ENCODE measurements at regions of chr12 and their contacts with region 1.

Region 1: GRCh38 chr12:31317471-31318395 is 8.2 kb downstream of the SINHCAF start:
- DNase-seq: peak in 6 of 9 donors; percentile 29 to 58 (median 49)
- ATAC-seq: peak; percentile 80
- H3K4me3 ChIP-seq: peak overlapping the region; percentile 34
- H3K4me3 Mint-ChIP-seq: peak overlapping the region; percentile 69 to 95 (median 87)
- H3K27ac ChIP-seq: peak overlapping the region; percentile 64
- H3K27ac Mint-ChIP-seq: peak overlapping the region; percentile 81 to 95 (median 93)
- H3K4me1 ChIP-seq: peaks cover 24 to 60% of the 10 kb centered on the region in 2 donors
- H3K4me1 Mint-ChIP-seq: peaks cover 62 to 90% (median 77%) of the 10 kb centered on the region in 7 donors
- H3K27me3 ChIP-seq: no peaks in the 10 kb centered on the region
- H3K27me3 Mint-ChIP-seq: no peaks in the 10 kb centered on the region

Region 2: DNA sequence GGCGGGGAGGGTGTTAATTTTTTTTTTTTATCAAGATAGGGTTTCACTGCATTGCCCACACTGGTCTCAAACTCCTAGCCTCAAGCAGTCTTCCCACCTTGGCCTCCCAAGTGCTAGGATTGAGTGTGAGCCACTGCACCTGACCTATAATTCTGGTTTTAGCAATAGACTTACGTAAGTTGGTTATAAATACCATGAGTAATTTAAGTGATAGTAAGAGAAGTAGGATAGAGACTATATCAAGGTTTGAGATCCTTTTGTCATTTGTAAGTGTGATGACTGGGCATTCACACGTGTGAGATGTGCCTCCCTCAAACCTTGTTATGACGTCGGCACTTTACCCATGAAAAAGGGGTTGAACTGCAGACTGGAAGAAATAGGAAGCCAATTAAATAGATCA is 14.3 kb before region 1 on chr12:
- CTCF ChIA-PET with region 1: no interaction called
- POLR2A ChIA-PET with region 1: interaction called, 4 read pairs
- intact Hi-C with region 1: loop called in 1 of 2 experiments (anchors 1 kb)
- DNase-seq: no peak
- ATAC-seq: no peak
- H3K4me3 ChIP-seq: no peak overlapping the region
- H3K4me3 Mint-ChIP-seq: no peak overlapping the region
- H3K27ac ChIP-seq: no peak overlapping the region
- H3K27ac Mint-ChIP-seq: peak overlapping the region in 2 of 9 donors; percentile 64 to 72
- H3K4me1 ChIP-seq: peaks cover 0 to under 1% of the 10 kb centered on the region in 2 donors
- H3K4me1 Mint-ChIP-seq: peaks cover 24 to 74% (median 64%) of the 10 kb centered on the region in 7 donors
- H3K27me3 ChIP-seq: no peaks in the 10 kb centered on the region
- H3K27me3 Mint-ChIP-seq: no peaks in the 10 kb centered on the region